Tibial artery (tissue), 4 donors: ENCODE measurements at regions of chr10 and their contacts with region 1.

Region 1: DNA sequence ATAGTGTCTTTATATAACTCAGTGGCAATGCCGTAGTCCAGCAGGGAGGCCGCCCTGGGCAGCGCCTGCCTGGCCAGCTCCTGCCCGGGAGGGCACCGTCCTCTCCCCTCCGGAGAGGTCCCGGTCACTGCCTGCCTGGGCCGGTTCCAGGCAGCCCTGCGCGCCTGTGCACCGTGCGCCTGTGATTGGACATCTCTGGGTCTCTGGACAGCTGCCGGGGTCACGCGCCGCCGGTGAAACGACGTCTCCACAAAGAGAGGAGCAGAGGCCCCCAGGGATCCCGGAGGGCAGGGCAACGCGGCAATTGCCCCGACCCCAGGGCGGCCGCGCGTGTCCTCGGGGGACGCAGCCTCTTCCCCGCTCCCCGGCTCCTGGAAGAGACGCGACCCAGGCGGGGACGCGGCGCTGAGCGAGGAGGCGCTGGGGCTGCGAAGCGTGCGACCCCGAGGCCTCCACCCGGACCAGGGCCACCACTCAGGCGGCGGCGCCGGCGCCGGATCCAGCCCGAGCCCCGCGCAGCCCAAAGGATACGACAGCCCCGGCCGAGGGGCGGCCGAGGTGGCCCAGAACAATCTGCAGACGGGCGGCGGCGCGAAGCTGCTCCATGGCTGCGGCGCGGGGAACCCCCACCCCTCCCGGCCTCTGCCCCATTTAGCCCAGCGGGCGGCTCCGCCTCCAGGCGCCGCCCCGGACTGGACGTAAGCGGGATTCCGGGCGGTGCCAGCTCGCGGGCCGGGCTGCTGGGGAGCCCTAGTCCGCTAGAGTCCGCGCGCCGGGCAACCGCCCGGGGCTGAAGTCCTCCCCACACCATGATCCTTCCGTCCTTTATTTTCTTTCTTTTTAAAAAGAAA is at the start of gene PHYH:
- DNase-seq: peak; percentile 94 to 97
- H3K4me3 ChIP-seq: peak within 1 kb of the TSS; percentile 93 to 98
- H3K27ac ChIP-seq: peak within 1 kb of the TSS; percentile 99 to 100
- H3K4me1 ChIP-seq: peaks cover 0 to 30% (median 14%) of the 10 kb centered on the region in 4 donors
- H3K27me3 ChIP-seq: no peaks in the 10 kb centered on the region
- CTCF ChIP-seq: no peak

Region 2: GRCh38 chr10:13160934-13161856 is 138.5 kb before region 1 on chr10 and contains the start of gene MCM10:
- intact Hi-C with region 1: loop called (anchors 5 kb)
- DNase-seq: peak; percentile 98 to 99
- H3K4me3 ChIP-seq: peak within 1 kb of the TSS; percentile 37 to 48
- H3K27ac ChIP-seq: no peak within 1 kb of the TSS
- H3K4me1 ChIP-seq: peaks cover 4 to 15% (median 8%) of the 10 kb centered on the region in 4 donors
- H3K27me3 ChIP-seq: no peaks in the 10 kb centered on the region
- CTCF ChIP-seq: peak; percentile 70 to 94

Region 3: GRCh38 chr10:13422566-13423199 is 123.0 kb after region 1 on chr10:
- intact Hi-C with region 1: no loop called
- DNase-seq: no peak
- H3K4me3 ChIP-seq: no peak overlapping the region
- H3K27ac ChIP-seq: no peak overlapping the region
- H3K4me1 ChIP-seq: no peaks in the 10 kb centered on the region
- H3K27me3 ChIP-seq: peaks cover 0 to 13% of the 10 kb centered on the region in 2 donors
- CTCF ChIP-seq: no peak